ENCODE measurements at regions of chr2 and their contacts with region 1.

Region 1: DNA sequence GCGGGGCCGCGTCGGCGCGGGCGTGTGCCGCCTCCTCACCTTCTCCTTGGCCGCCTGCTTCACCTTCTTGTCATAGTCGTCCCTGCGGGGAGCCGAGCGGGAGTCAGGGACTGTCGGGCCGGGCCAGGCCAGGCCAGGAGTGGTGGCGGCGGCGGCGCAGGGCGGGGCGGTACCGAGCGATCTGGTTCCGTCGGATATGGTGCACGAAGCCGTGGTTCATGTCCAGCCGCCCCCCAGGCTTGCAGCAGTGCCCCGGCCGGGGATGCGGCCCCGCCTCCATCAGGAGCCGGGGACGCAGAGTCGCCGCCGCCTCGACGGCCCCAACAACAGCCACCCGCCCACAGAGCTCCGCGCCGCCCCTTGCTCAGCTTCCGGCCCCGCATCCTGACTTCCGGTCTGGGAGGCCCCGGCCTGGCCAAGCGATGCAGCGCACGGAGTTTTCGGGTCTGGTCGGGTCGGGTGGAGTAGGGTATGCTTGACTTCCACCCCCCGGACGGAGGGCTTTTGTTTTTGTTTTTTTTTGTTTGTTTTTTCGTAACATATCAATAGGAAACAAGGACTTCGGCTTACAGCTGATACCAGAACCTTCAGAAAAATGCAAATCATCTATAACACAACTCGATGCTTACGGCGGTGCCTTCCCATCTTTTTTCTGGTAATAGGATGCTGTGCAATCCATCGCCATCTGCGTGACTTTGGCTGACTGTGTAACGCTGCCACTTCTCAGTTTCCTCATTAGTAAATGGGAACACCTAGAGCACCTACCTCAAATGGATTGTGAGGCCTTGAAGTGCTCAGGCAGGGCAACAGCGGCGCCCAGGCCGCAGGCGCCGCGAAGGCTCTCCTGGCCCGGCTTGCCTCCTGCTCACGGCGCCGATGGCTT is at the start of gene C2orf68:
- DNase-seq: peak; percentile 81
- ATAC-seq: peak; percentile 76
- H3K4me3 ChIP-seq: peak within 1 kb of the TSS; percentile 93 to 98
- H3K27ac ChIP-seq: peak within 1 kb of the TSS; percentile 87
- H3K4me1 ChIP-seq: peaks cover 10 to 29% of the 10 kb centered on the region in 2 experiments
- H3K27me3 ChIP-seq: no peaks in the 10 kb centered on the region
- CTCF ChIP-seq: no peak
- POLR2A ChIP-seq: peak; percentile 93
- RAD21 ChIP-seq: no peak
- total RNA-seq, gene C2orf68: 21.8 TPM

Region 2: GRCh38 chr2:85354286-85355072 is 257.5 kb before region 1 on chr2 and contains the starts of genes ELMOD3 and RETSAT:
- CTCF ChIA-PET with region 1: no interaction called
- POLR2A ChIA-PET with region 1: interaction called, 3 read pairs
- RAD21 ChIA-PET with region 1: no interaction called
- intact Hi-C with region 1: loop called (anchors 5 kb)
- DNase-seq: peak; percentile 99
- ATAC-seq: peak; percentile 97
- H3K4me3 ChIP-seq: peak within 1 kb of the TSS; percentile 86 to 95
- H3K27ac ChIP-seq: peak within 1 kb of the TSS; percentile 75
- H3K4me1 ChIP-seq: peaks cover 9 to 14% of the 10 kb centered on the region in 2 experiments; a peak in 3 of 4 replicates
- H3K27me3 ChIP-seq: no peaks in the 10 kb centered on the region
- CTCF ChIP-seq: no peak
- POLR2A ChIP-seq: peak; percentile 89
- RAD21 ChIP-seq: no peak
- total RNA-seq, gene ELMOD3: 9.2 TPM
- total RNA-seq, gene RETSAT: 59.7 TPM

Region 3: GRCh38 chr2:85935746-85936208 is 323.8 kb after region 1 on chr2:
- CTCF ChIA-PET with region 1: no interaction called
- POLR2A ChIA-PET with region 1: no interaction called
- RAD21 ChIA-PET with region 1: no interaction called
- intact Hi-C with region 1: loop called (anchors 5 kb)
- DNase-seq: peak; percentile 81
- ATAC-seq: peak; percentile 86
- H3K4me3 ChIP-seq: peak overlapping the region in 1 of 2 experiments; percentile 45; a peak in 2 of 4 replicates
- H3K27ac ChIP-seq: peak overlapping the region; percentile 70
- H3K4me1 ChIP-seq: peaks cover 40 to 46% of the 10 kb centered on the region in 2 experiments
- H3K27me3 ChIP-seq: no peaks in the 10 kb centered on the region
- CTCF ChIP-seq: no peak
- POLR2A ChIP-seq: no peak
- RAD21 ChIP-seq: no peak